WTC11 (cell line): ENCODE measurements at regions of chr1 and their contacts with region 1.

Region 1: DNA sequence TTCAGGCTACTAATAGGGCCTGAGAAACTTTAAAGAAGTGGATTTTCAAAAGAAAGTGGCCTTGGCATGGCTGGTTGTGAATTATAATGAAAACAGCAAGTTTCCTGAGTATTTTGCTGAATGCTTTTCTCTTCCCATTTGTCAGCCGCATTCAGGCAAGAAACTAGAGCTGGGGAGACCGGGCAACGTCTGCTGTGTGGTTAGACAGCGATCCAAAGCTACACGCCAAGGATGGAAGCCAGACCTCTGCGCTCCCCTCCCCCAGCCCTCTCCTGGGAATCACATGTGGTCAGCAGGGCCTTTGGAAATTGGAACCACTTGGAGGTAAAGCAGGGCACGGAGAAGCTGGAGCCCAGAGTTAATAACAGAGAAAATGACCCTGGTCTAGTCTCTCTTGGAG is 114.1 kb upstream of the CD34 start:
- DNase-seq: no peak
- ATAC-seq: no peak
- H3K4me3 Mint-ChIP-seq: no peak overlapping the region
- H3K27ac Mint-ChIP-seq: no peak overlapping the region
- H3K4me1 Mint-ChIP-seq: peaks cover 12% of the 10 kb centered on the region
- H3K27me3 Mint-ChIP-seq: 0 out of 2 replicates have a peak, but pooled peaks cover 3% of the 10 kb centered on the region
- CTCF ChIP-seq: no peak

Region 2: GRCh38 chr1:208047476-208047934 is 22.5 kb after region 1 on chr1:
- CTCF ChIA-PET with region 1: interaction called, 36 read pairs
- POLR2A ChIA-PET with region 1: no interaction called
- DNase-seq: no peak
- ATAC-seq: no peak
- H3K4me3 Mint-ChIP-seq: no peak overlapping the region
- H3K27ac Mint-ChIP-seq: no peak overlapping the region
- H3K4me1 Mint-ChIP-seq: peaks cover 11% of the 10 kb centered on the region
- H3K27me3 Mint-ChIP-seq: no peaks in the 10 kb centered on the region; the same call in 1 of the 2 replicates
- CTCF ChIP-seq: no peak

Region 3: GRCh38 chr1:208190784-208191183 is 165.8 kb after region 1 on chr1:
- CTCF ChIA-PET with region 1: interaction called, 26 read pairs
- POLR2A ChIA-PET with region 1: no interaction called
- DNase-seq: peak; percentile 34
- ATAC-seq: peak; percentile 83
- H3K4me3 Mint-ChIP-seq: no peak overlapping the region
- H3K27ac Mint-ChIP-seq: no peak overlapping the region
- H3K4me1 Mint-ChIP-seq: no peaks in the 10 kb centered on the region
- H3K27me3 Mint-ChIP-seq: no peaks in the 10 kb centered on the region
- CTCF ChIP-seq: no peak

Region 4: DNA sequence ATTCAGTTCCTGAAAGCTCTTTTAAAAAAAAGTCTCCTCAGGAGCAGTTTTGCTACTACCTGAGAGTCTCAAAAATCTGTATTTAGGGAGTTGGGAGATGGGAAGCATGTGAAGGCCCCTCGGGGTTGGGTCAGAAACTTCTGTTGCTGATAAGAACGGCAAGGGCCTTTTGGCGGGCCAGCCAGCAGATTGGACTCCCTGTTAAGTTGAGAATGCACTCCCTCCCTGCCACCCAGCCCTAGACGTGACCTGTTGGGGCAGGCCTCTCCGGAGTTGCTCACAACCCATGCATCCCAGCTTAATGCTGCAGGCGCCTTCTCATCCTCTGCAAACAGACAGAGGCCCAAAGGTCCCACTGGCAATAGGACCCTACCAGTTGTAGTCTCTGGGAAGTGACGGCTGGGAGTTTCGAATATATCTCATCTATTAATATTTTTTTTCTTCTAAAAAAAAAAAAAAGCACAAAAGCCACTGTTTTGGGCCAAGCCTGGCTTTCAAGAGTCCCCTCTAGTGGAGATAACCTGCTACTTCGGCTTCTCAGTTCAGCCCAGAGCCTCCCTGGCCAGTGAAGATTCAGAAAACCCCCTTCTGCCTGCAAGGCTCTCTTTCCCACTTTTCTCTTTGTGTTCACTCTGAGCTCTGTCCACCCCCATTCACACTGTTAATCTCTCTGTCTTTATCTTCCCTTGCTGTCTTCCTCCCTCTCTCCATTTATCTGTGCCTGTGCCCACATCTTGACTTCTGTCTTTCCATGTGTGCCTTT is 213.9 kb after region 1 on chr1:
- CTCF ChIA-PET with region 1: interaction called, 56 read pairs
- POLR2A ChIA-PET with region 1: interaction called, 3 read pairs
- DNase-seq: peak; percentile 51
- ATAC-seq: peak; percentile 69
- H3K4me3 Mint-ChIP-seq: no peak overlapping the region
- H3K27ac Mint-ChIP-seq: no peak overlapping the region
- H3K4me1 Mint-ChIP-seq: peaks cover 47% of the 10 kb centered on the region
- H3K27me3 Mint-ChIP-seq: peaks cover 31% of the 10 kb centered on the region
- CTCF ChIP-seq: peak; percentile 64

Region 5: GRCh38 chr1:208251911-208252835 is 227.1 kb after region 1 on chr1:
- CTCF ChIA-PET with region 1: interaction called, 18 read pairs
- POLR2A ChIA-PET with region 1: no interaction called
- DNase-seq: peak; percentile 31
- ATAC-seq: peak; percentile 84
- H3K4me3 Mint-ChIP-seq: no peak overlapping the region
- H3K27ac Mint-ChIP-seq: no peak overlapping the region
- H3K4me1 Mint-ChIP-seq: peaks cover 20% of the 10 kb centered on the region
- H3K27me3 Mint-ChIP-seq: peaks cover 33% of the 10 kb centered on the region
- CTCF ChIP-seq: no peak